Heart left ventricle (tissue), 16 donors: ENCODE measurements at regions of chr10 and their contacts with region 1.

Region 1: DNA sequence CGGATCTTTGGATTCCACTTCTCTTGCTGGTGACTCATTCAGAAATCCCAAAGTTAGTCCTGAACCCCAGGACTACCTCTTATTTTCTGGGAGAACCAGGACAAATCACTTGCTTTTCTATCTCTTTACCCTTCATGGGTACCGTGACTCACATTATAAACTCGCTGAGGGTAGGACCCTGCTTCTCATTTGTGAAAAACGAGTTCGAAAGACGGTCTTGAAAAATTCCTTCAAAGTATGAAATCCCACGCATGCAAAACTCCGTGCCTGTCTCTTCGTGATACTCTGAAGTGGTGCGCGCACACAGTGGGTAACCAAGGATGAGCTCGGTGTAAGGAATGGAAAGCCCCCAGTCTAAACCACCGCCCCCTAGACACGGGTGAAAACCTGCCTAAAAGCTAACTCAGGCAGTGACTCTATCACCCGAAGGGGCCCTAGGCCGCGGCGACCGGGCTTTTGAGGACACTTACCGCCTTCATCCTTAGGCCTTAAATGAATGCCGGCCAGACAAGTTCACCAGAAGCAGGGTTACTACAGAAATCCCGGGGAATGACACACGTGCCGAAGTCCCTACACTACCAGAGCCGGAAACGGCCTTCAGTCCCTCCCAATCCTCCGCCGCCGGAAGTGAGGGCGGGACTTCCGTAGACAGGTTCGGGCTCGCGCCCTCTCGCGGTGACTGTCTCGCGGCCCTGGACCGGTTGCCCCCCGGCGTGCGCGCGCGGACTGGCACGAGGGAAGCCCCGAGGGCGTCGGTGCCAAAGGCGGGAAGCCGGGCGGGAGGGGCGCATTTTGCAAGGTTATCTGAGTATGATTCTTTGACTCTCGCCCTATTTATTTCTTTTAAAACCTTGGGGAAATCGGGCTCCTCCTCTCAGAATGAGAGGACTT is at the start of gene NOC3L:
- DNase-seq: peak; percentile 93 to 97 (median 97)
- ATAC-seq: peak; percentile 99 to 100 (median 100)
- H3K4me3 ChIP-seq: peak within 1 kb of the TSS; percentile 56 to 84 (median 77)
- H3K27ac ChIP-seq: peak within 1 kb of the TSS in 11 of 12 donors; percentile 25 to 86 (median 64)
- H3K4me1 ChIP-seq: peaks cover 0 to 21% (median 13%) of the 10 kb centered on the region in 12 donors
- H3K27me3 ChIP-seq: no peaks in the 10 kb centered on the region
- CTCF ChIP-seq: peak; percentile 73 to 96 (median 93)
- POLR2A ChIP-seq: peak in 1 of 2 donors; percentile 34
- total RNA-seq, gene NOC3L: 4.5 to 12.0 (median 8.2) TPM

Region 2: DNA sequence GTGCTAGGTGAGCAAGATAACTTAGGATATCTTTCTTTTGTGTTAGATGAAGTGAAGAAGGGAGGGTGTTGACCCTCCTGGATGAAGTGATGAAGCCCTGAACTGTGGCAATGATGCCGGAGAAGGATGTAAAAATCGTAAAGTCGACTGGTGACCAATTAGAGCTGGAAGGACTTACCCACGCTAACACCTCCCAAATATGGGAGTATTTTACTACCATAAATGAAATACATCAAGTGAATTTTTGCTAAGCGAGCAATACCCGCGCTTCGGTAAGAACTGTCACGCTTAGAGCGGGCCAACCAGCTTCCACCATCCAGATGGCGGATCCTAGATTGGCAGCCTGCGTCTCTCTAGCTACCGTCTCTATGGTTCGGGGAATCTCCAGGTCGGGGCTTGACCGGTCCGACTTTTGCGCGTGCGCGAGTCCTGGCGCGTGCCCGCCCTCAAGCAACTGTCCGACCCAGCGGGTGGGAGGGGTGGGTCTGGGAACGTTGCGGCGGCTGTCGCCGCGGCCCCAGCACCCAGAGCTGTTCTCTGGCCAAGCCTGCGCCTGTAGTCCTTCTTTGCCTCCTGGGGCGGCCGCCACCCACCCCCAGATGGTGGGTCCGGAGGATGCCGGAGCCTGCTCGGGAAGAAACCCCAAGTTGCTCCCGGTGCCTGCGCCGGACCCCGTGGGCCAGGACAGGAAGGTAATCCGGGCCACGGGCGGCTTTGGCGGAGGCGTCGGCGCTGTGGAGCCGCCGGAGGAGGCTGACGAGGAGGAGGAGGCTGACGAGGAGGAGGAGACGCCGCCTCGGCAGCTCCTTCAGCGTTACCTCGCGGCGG is 39.6 kb after region 1 on chr10 and contains the start of gene TBC1D12:
- intact Hi-C with region 1: loop called in 9 of 10 experiments (anchors 1 to 5 kb)
- DNase-seq: peak; percentile 96 to 97 (median 96)
- ATAC-seq: peak; percentile 96 to 99 (median 98)
- H3K4me3 ChIP-seq: peak within 1 kb of the TSS; percentile 73 to 99 (median 87)
- H3K27ac ChIP-seq: peak within 1 kb of the TSS; percentile 84 to 99 (median 94)
- H3K4me1 ChIP-seq: peaks cover 0 to 28% (median 16%) of the 10 kb centered on the region in 12 donors
- H3K27me3 ChIP-seq: peaks cover 0 to 11% (median 0%) of the 10 kb centered on the region in 9 donors
- CTCF ChIP-seq: no peak
- POLR2A ChIP-seq: peak in 1 of 2 donors; percentile 63
- total RNA-seq, gene TBC1D12: 3.9 to 9.6 (median 5.2) TPM